ENCODE measurements at regions of chr20 and their contacts with region 1.

Region 1: DNA sequence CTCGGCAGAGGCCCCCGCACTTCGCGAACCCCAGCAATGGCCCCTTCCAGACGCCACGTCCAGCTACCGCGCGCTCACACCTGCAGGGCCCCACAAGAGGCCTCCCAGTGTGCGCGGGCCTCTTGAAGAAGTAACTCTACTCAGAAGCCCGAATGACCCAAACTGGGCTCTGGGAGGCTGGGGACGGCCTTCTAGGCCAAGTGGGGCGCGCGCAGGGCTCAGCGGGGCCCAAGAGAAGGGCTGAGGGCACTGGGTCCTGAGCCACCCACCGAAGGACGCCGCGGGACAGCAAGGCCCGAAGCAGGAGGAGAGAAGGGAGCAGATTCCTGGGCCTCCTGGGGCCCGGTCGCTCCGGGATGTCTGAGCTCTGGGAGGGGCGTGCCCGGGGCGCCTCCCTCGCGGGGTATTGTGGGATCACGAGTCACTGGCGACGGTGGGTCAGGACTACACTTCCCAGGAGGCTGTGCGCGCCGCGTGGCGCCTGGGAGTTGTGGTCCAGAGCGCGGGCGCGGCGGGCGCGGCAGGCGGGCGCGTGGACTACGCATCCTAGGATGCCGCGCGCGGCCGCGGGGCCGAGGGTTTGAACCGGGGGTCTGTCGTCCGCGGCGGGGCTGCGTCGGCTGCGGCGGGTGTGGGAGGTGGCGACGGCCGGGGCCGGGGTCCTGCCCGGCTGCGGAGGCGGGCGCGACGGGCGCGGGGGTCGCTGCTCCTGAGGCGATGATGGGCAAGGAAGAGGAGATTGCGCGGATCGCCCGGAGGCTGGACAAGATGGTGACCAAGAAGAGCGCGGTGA is at the start of gene TCEA2:
- DNase-seq: peak; percentile 93
- H3K4me3 ChIP-seq: peak within 1 kb of the TSS; percentile 81 to 92 (median 91)
- H3K27ac ChIP-seq: peak within 1 kb of the TSS; percentile 48
- H3K4me1 ChIP-seq: peaks cover 54% of the 10 kb centered on the region
- H3K27me3 ChIP-seq: no peaks in the 10 kb centered on the region
- CTCF ChIP-seq: no peak
- total RNA-seq, gene TCEA2: 15.7 to 37.9 TPM

Region 2: GRCh38 chr20:63750807-63751470 is 311.9 kb before region 1 on chr20:
- CTCF ChIA-PET with region 1: no interaction called
- dilution Hi-C with region 1: no loop called
- in situ Hi-C with region 1: no loop called
- intact Hi-C with region 1: no loop called
- DNase-seq: no peak
- H3K4me3 ChIP-seq: no peak overlapping the region
- H3K27ac ChIP-seq: no peak overlapping the region
- H3K4me1 ChIP-seq: no peaks in the 10 kb centered on the region
- H3K27me3 ChIP-seq: no peaks in the 10 kb centered on the region
- CTCF ChIP-seq: no peak

Region 3: DNA sequence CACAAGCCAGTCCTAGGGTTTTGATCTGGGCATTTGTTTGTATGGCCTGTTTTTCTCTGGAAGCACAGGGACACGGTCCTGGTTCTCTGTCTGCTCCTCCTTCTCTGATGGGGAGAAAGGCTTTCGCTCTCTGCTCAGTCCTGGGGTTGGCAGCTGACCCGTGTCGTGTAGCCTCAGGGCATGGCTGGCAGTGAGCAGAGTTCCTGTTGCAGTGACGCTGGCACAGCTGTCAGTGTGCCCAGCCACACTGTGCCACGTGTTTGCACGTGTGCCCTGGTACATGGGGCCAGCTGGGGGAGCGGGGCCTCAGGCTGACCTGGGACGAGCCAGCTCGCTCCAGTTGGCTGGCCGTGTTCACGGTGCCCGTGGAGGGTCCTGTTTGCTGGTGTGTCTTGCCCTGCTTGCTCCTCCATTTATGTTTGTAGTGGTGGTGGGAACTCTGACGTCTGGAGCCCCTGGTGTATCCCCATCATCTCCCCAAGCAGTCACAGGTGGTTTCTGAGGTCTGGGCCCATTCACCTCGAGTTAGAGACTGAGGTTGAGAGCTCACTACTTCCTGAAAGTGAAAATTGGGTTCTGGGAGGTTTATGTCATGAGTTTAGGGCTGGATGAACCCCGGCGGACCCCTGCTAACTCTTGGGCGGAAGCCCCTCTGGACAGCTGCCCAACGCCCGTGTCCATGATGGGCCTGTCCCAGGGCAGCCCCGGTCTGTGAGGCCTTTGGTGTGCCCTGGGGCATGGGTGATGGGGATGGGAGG is 178.1 kb before region 1 on chr20:
- CTCF ChIA-PET with region 1: no interaction called
- dilution Hi-C with region 1: no loop called
- in situ Hi-C with region 1: no loop called
- intact Hi-C with region 1: no loop called
- DNase-seq: no peak
- H3K4me3 ChIP-seq: no peak overlapping the region
- H3K27ac ChIP-seq: no peak overlapping the region
- H3K4me1 ChIP-seq: peaks cover 27% of the 10 kb centered on the region
- H3K27me3 ChIP-seq: no peaks in the 10 kb centered on the region
- CTCF ChIP-seq: no peak

Region 4: DNA sequence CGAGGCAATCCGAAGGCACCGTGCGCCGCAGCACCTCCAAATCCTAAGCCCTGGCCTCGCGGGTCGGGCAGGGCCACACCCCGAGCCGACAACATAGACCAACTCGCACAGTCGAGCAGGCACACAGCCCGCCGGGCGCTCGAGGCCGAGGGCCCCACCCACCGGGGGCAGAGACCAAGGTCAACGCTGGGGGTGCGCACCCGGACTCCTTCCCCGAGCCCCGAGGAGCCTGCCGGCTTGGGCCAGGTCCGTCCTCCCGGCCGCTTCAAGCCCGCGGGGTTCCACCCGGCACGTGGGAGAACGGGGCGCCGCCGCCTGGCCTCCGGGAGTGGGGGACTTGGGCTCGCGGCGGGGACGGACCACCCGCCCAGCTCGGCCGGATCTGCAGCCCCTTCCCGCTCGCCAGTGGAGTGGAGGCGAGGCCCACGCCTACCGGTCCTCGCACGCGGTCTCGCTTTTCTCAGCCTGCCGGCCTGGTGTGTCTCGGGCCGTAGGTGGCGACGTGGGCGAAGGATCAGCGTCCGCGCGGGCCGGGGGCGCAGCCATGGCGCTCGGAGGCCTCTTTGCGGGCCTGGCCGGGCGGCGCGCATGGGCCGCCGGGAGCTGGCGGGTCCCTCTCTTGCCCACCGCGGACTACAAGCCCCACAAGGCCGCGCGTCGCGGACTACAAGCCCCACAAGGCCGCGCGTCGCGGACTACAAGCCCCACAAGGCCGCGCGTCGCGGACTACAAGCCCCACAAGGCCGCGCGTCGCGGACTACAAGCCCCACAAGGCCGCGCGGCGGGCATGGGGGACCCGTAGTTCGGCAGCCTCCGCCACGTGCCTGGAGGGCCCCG is 106.7 kb before region 1 on chr20 and contains the start of gene UCKL1:
- CTCF ChIA-PET with region 1: no interaction called
- dilution Hi-C with region 1: no loop called
- in situ Hi-C with region 1: no loop called
- intact Hi-C with region 1: loop called (anchors 5 kb)
- DNase-seq: peak; percentile 78
- H3K4me3 ChIP-seq: peak within 1 kb of the TSS; percentile 80 to 92 (median 88)
- H3K27ac ChIP-seq: peak within 1 kb of the TSS; percentile 55
- H3K4me1 ChIP-seq: peaks cover 39% of the 10 kb centered on the region
- H3K27me3 ChIP-seq: no peaks in the 10 kb centered on the region
- CTCF ChIP-seq: no peak
- total RNA-seq, gene UCKL1: 28.5 to 34.3 TPM

Region 5: GRCh38 chr20:63980806-63981728 is 81.7 kb before region 1 on chr20 and contains the start of gene PRPF6:
- CTCF ChIA-PET with region 1: no interaction called
- dilution Hi-C with region 1: no loop called
- in situ Hi-C with region 1: no loop called
- intact Hi-C with region 1: loop called (anchors 2 kb)
- DNase-seq: peak; percentile 90
- H3K4me3 ChIP-seq: peak within 1 kb of the TSS; percentile 71 to 94 (median 87)
- H3K27ac ChIP-seq: peak within 1 kb of the TSS; percentile 73
- H3K4me1 ChIP-seq: peaks cover 38% of the 10 kb centered on the region
- H3K27me3 ChIP-seq: no peaks in the 10 kb centered on the region
- CTCF ChIP-seq: peak; percentile 53 to 93
- total RNA-seq, gene PRPF6: 33.5 to 56.9 TPM

Region 6: GRCh38 chr20:64038565-64039292 is 24.1 kb before region 1 on chr20:
- CTCF ChIA-PET with region 1: interaction called, 10 read pairs
- dilution Hi-C with region 1: no loop called
- in situ Hi-C with region 1: no loop called
- intact Hi-C with region 1: loop called (anchors 1 kb)
- DNase-seq: peak; percentile 80
- H3K4me3 ChIP-seq: peak overlapping the region; percentile 4 to 55 (median 44)
- H3K27ac ChIP-seq: no peak overlapping the region
- H3K4me1 ChIP-seq: peaks cover 10% of the 10 kb centered on the region
- H3K27me3 ChIP-seq: no peaks in the 10 kb centered on the region
- CTCF ChIP-seq: peak; percentile 36 to 78

Measured in mammary epithelial cell (primary cell).